OCI-LY7 (cell line): ENCODE measurements at regions of chrX and their contacts with region 1.

Region 1: DNA sequence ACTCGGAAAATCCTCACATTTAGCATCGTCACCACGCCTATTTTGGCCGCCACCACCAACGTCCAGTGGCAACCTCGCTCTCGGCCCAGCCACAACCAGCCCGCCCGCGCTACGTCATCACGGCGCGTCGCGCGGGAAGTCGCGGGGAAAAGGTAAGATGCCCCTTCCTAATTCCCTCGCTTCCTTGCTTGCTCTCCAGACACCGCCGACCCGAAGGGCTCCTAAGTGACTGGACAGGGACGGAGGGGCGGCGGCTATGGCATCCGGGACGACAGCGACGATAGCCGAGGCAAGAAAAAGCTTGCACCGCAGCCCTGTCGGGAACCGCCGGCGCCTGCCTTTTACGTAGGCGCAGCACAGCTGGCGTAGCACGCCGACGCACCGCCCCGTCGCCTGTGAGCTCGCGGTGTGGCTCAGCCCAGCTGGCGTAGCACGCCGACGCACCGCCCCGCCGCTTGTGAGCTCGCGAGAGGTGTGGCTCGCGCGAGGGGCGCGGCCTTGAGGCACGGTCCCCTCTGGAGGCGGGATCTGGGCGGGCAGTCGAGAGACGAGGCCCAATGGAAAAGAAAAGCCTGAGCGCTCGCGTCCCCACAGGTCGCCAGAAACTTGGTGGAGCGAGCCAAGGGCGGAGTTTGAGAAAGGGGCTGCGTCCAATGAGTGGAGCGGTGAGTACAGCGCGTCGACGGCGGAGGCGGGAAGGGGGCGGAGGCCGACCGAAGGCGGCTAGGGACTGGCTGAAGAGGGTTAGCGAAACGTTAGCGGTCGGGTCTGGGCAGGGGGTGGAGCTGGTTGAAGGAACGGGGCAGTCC is at the start of gene HDAC6:
- DNase-seq: peak; percentile 98
- H3K4me3 ChIP-seq: peak within 1 kb of the TSS; percentile 77
- H3K27ac ChIP-seq: peak within 1 kb of the TSS; percentile 86
- H3K4me1 ChIP-seq: peaks cover 18% of the 10 kb centered on the region
- CTCF ChIP-seq: no peak
- total RNA-seq, gene HDAC6: 62.0 and 73.6 TPM in 2 replicates

Region 2: DNA sequence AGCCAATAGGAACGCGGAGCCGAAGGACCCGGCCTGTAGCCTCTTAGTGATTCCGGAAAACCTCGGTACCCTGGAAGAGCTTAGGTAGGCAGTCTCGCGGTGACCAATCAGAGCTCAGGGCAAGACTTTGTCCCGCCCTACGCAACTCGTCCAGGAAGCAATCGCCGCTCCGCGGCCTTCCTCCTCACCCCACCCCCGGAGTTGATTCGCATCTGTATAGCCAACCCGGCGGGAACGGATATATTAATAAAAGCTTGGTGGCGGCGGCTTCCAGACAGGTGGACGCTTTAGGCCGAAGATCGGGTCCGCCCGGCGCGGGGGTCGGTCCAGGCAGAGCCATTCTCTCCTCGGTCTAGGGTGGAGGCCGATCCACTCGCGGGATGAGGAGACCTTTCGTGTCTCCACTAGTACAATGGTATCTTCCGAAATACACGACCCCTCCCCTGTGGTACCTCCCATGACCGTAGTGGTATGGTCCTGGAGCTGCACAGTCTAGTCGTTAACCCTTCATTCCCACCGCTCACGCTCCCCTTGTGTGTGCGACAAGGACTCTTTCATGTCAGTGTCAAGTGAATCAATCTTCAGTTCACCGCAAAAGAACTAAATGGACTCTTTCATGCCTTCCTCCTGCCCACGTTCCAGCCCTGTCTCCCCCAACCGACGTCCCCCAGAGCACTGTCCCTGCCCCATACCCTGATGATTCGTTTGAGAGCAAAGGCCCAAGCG is 64.1 kb before region 1 on chrX:
- CTCF ChIA-PET with region 1: no interaction called
- POLR2A ChIA-PET with region 1: interaction called, 3 read pairs
- intact Hi-C with region 1: loop called (anchors 5 kb)
- DNase-seq: peak; percentile 98
- H3K4me3 ChIP-seq: peak overlapping the region; percentile 73
- H3K27ac ChIP-seq: peak overlapping the region; percentile 92
- H3K4me1 ChIP-seq: peaks cover 10% of the 10 kb centered on the region
- CTCF ChIP-seq: no peak